K562 (cell line): ENCODE measurements at regions of chr3 and their contacts with region 1.

Region 1: DNA sequence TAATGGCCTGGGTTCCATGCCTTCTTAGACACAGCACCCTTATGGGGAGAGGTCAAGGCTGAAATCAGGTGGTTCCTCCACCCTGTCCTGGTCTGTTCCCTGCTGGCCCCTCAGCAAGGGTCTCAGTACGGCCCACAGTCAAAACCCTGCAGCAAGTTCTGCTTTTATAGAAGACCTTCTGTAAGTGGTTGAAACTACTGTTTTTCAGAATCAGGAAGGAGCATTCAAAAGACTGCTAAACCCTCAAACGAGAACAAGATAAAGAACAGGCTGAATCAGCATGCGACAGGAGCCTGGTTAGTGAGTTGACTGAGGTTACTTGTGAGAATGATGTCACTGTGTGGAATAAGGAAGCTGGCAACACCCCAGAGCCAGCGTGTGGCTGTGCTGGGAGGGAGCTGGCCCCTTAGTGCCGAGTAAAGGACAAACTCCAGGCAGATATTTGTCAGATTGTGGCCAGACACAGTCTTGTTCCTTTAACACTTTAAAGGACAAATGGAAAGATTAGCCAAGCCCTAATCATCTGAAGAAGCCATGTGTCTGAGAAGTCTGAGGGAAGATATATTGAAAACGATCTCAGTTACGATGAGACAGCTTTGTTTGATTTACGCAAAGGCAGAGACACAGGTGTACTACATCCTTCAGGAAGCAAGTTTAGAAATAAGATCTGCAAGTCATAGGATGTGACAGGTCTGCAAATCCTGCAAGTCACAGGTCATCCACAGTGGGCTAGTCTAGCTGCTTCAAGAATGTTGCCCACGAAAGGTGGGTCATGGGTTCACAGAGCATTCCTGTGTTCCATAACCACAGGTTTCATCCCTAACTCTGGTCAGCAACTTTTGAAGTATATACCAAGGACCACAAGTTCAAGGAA is 54.0 kb downstream of the B3GNT5 start:
- DNase-seq: peak; percentile 47 to 80 (median 63)
- ATAC-seq: peak; percentile 97
- H3K4me3 ChIP-seq: no peak overlapping the region
- H3K27ac ChIP-seq: peak overlapping the region; percentile 74
- H3K4me1 ChIP-seq: peaks cover 5 to 15% of the 10 kb centered on the region in 2 experiments; a peak in 4 of 5 replicates
- H3K27me3 ChIP-seq: no peaks in the 10 kb centered on the region
- CTCF ChIP-seq: no peak
- EP300 ChIP-seq: no peak; the same call in 1 of the 2 replicates
- POLR2A ChIP-seq: no peak
- RAD21 ChIP-seq: peak in 1 of 2 experiments; percentile 32; a peak in 3 of 4 replicates

Region 2: GRCh38 chr3:183142199-183142598 is 164.8 kb before region 1 on chr3:
- CTCF ChIA-PET with region 1: no interaction called
- POLR2A ChIA-PET with region 1: no interaction called
- in situ Hi-C with region 1: no loop called
- intact Hi-C with region 1: no loop called
- DNase-seq: no peak
- ATAC-seq: peak; percentile 36; the same call in 1 of the 3 replicates
- H3K4me3 ChIP-seq: no peak overlapping the region
- H3K27ac ChIP-seq: no peak overlapping the region
- H3K4me1 ChIP-seq: no peaks in the 10 kb centered on the region
- H3K27me3 ChIP-seq: peaks cover 8 to 23% of the 10 kb centered on the region in 2 experiments; a peak in 3 of 5 replicates
- CTCF ChIP-seq: no peak
- EP300 ChIP-seq: no peak
- POLR2A ChIP-seq: no peak
- RAD21 ChIP-seq: no peak

Region 3: GRCh38 chr3:183265834-183266417 is 41.1 kb before region 1 on chr3:
- CTCF ChIA-PET with region 1: no interaction called
- POLR2A ChIA-PET with region 1: no interaction called
- in situ Hi-C with region 1: no loop called
- intact Hi-C with region 1: loop called (anchors 2 kb)
- DNase-seq: no peak
- ATAC-seq: no peak
- H3K4me3 ChIP-seq: no peak overlapping the region
- H3K27ac ChIP-seq: no peak overlapping the region
- H3K4me1 ChIP-seq: peaks cover 0 to 13% of the 10 kb centered on the region in 2 experiments; a peak in 4 of 5 replicates
- H3K27me3 ChIP-seq: no peaks in the 10 kb centered on the region
- CTCF ChIP-seq: no peak
- EP300 ChIP-seq: no peak
- POLR2A ChIP-seq: no peak
- RAD21 ChIP-seq: no peak

Region 4: DNA sequence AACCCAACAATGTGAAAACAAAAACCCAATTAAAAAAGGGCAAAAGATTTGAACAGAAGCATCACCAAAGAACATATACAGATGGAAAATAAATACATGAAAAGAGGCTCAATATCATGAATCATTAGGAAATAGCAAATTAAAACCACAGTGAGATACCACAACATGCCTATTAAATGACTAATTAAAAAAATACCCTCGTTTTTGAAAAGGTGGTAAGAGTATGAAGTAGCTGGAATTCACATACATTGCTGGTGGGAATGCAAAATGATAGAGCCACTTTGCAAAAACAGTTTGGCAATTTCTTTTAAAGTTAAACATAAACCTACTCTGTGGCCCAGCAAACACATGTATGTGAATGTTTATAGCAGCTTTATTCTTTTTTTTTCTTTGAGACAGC is 21.8 kb after region 1 on chr3:
- CTCF ChIA-PET with region 1: no interaction called
- POLR2A ChIA-PET with region 1: interaction called, 4 read pairs
- in situ Hi-C with region 1: no loop called
- intact Hi-C with region 1: loop called (anchors 2 kb)
- DNase-seq: no peak
- ATAC-seq: no peak
- H3K4me3 ChIP-seq: no peak overlapping the region
- H3K27ac ChIP-seq: no peak overlapping the region
- H3K4me1 ChIP-seq: peaks cover 10 to 29% of the 10 kb centered on the region in 2 experiments; a peak in 4 of 5 replicates
- H3K27me3 ChIP-seq: no peaks in the 10 kb centered on the region
- CTCF ChIP-seq: no peak
- EP300 ChIP-seq: no peak
- POLR2A ChIP-seq: no peak
- RAD21 ChIP-seq: no peak

Region 5: DNA sequence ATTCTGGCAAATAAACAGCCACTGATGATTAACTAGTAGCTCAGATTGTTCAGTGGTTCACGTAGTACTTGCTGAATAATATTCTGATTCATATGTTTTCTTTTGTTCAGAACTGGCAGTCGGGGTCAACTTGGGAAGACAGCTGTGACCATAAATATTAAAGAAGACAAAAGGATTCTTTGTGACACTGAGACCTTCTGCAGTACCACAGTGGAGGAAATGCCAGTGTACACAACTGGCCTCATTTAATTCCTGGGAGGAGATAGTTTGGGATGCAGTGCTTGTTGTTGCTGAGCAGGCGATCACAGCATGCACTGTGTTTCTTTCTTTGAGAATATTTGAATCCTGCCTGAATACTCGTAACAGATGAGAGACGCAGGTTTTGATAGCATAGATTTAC is 148.1 kb after region 1 on chr3:
- CTCF ChIA-PET with region 1: no interaction called
- POLR2A ChIA-PET with region 1: no interaction called
- in situ Hi-C with region 1: no loop called
- intact Hi-C with region 1: no loop called
- DNase-seq: no peak
- ATAC-seq: no peak
- H3K4me3 ChIP-seq: no peak overlapping the region
- H3K27ac ChIP-seq: no peak overlapping the region
- H3K4me1 ChIP-seq: no peaks in the 10 kb centered on the region; a peak in 1 of 5 replicates
- H3K27me3 ChIP-seq: no peaks in the 10 kb centered on the region
- CTCF ChIP-seq: no peak
- EP300 ChIP-seq: no peak
- POLR2A ChIP-seq: no peak
- RAD21 ChIP-seq: no peak

Region 6: GRCh38 chr3:183513046-183513706 is 206.1 kb after region 1 on chr3:
- CTCF ChIA-PET with region 1: no interaction called
- POLR2A ChIA-PET with region 1: no interaction called
- in situ Hi-C with region 1: no loop called
- intact Hi-C with region 1: no loop called
- DNase-seq: no peak
- ATAC-seq: no peak
- H3K4me3 ChIP-seq: no peak overlapping the region
- H3K27ac ChIP-seq: no peak overlapping the region
- H3K4me1 ChIP-seq: peaks cover 8 to 22% of the 10 kb centered on the region in 2 experiments; a peak in 4 of 5 replicates
- H3K27me3 ChIP-seq: no peaks in the 10 kb centered on the region; a peak in 1 of 5 replicates
- CTCF ChIP-seq: no peak
- EP300 ChIP-seq: no peak
- POLR2A ChIP-seq: no peak
- RAD21 ChIP-seq: no peak